ENCODE measurements at regions of chr17 and their contacts with region 1.

Region 1: GRCh38 chr17:32136856-32137255 is 5.4 kb upstream of the RHOT1 start:
- DNase-seq: no peak
- ATAC-seq: no peak
- H3K4me3 ChIP-seq: no peak overlapping the region
- H3K27ac ChIP-seq: no peak overlapping the region
- H3K4me1 ChIP-seq: peaks cover 6% of the 10 kb centered on the region; the same call in 1 of the 2 replicates
- H3K27me3 ChIP-seq: no peaks in the 10 kb centered on the region
- CTCF ChIP-seq: no peak

Region 2: DNA sequence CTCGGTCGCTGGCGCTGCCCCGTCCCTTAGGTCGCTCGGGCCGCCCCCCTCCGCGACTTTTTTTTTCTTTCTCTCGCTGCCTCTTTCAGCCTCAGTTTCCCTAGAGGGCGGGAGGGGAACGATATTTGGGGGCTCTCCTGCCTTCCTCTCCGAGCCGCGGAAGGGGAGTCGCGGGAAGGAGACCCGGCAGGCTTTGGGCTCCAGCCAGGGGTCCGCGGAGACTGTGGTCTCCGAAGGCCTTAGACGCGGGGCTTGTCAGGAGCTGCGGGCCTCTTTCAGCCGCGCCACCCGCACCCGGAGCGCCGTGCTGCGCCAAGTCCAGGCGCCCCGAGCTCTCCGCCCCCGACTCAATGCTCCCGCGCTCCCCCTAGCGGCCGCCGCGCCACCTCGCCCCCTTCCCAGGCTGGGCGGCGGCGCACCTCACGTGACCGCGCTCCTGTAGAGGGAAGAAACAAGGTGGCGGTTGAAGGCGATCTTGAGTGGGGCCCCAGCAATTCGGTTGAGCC is 129.8 kb before region 1 on chr17 and contains the start of gene LRRC37B:
- CTCF ChIA-PET with region 1: no interaction called
- POLR2A ChIA-PET with region 1: no interaction called
- intact Hi-C with region 1: loop called (anchors 5 kb)
- DNase-seq: peak; percentile 75
- ATAC-seq: peak; percentile 89
- H3K4me3 ChIP-seq: peak within 1 kb of the TSS; percentile 95
- H3K27ac ChIP-seq: peak within 1 kb of the TSS; percentile 7
- H3K4me1 ChIP-seq: no peaks in the 10 kb centered on the region
- H3K27me3 ChIP-seq: no peaks in the 10 kb centered on the region
- CTCF ChIP-seq: peak; percentile 61
- total RNA-seq, gene LRRC37B: 7.4 and 9.5 TPM in 2 replicates

Region 3: DNA sequence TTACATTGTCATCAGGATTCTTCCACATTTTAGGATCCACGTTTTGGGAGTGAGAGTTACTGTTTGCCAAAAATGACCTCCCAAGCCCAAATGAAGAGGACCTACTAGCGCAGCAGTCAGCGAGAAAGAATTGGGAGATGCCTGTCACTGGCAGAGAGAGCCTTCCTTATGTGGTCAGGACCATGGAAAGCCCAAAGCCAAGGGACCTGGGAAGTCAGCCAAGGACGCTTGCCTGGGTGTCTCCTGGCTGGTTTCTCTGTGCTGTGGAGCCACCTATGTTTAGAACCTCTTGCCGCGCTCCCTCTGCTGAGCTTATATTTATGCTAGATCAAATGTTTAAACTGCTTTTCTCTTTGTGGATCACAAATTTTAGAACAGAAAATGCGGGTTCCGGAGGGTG is 103.9 kb after region 1 on chr17:
- CTCF ChIA-PET with region 1: no interaction called
- POLR2A ChIA-PET with region 1: no interaction called
- intact Hi-C with region 1: no loop called
- DNase-seq: no peak
- ATAC-seq: no peak
- H3K4me3 ChIP-seq: no peak overlapping the region
- H3K27ac ChIP-seq: no peak overlapping the region
- H3K4me1 ChIP-seq: no peaks in the 10 kb centered on the region
- H3K27me3 ChIP-seq: no peaks in the 10 kb centered on the region
- CTCF ChIP-seq: no peak

Region 4: DNA sequence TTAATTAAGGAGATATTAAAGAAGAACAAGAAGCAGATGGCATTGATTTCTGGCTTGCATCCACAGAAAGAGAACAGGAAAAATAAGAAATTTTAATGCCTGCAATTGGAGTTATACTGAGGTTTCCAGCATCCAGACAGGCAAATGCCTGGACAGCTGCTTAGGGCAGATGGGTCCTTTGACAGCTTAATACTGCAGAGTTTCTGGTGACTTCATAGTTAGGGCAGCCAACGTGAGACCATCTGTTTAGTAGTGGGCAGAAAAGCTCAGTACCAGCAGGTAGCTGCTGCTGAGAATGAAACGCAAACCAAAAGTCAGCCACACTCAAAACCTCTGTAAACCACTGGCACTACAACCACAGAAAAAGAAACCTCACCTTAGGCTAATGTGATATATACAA is 459.8 kb after region 1 on chr17:
- CTCF ChIA-PET with region 1: no interaction called
- POLR2A ChIA-PET with region 1: no interaction called
- intact Hi-C with region 1: no loop called
- DNase-seq: no peak
- ATAC-seq: no peak
- H3K4me3 ChIP-seq: no peak overlapping the region
- H3K27ac ChIP-seq: no peak overlapping the region
- H3K4me1 ChIP-seq: no peaks in the 10 kb centered on the region
- H3K27me3 ChIP-seq: no peaks in the 10 kb centered on the region
- CTCF ChIP-seq: no peak